ENCODE measurements at regions of chr1 and their contacts with region 1.

Region 1: GRCh38 chr1:180881806-180882509 is 30.7 kb upstream of the KIAA1614 start:
- DNase-seq: no peak
- H3K4me3 ChIP-seq: no peak overlapping the region
- H3K27ac ChIP-seq: no peak overlapping the region
- H3K4me1 ChIP-seq: no peaks in the 10 kb centered on the region
- H3K27me3 ChIP-seq: no peaks in the 10 kb centered on the region
- CTCF ChIP-seq: peak; percentile 12 to 44 (median 27)

Region 2: GRCh38 chr1:180842052-180842451 is 39.9 kb before region 1 on chr1:
- intact Hi-C with region 1: no loop called
- DNase-seq: no peak
- H3K4me3 ChIP-seq: no peak overlapping the region
- H3K27ac ChIP-seq: no peak overlapping the region
- H3K4me1 ChIP-seq: peaks cover 0 to 6% of the 10 kb centered on the region in 2 donors
- H3K27me3 ChIP-seq: no peaks in the 10 kb centered on the region
- CTCF ChIP-seq: no peak

Region 3: DNA sequence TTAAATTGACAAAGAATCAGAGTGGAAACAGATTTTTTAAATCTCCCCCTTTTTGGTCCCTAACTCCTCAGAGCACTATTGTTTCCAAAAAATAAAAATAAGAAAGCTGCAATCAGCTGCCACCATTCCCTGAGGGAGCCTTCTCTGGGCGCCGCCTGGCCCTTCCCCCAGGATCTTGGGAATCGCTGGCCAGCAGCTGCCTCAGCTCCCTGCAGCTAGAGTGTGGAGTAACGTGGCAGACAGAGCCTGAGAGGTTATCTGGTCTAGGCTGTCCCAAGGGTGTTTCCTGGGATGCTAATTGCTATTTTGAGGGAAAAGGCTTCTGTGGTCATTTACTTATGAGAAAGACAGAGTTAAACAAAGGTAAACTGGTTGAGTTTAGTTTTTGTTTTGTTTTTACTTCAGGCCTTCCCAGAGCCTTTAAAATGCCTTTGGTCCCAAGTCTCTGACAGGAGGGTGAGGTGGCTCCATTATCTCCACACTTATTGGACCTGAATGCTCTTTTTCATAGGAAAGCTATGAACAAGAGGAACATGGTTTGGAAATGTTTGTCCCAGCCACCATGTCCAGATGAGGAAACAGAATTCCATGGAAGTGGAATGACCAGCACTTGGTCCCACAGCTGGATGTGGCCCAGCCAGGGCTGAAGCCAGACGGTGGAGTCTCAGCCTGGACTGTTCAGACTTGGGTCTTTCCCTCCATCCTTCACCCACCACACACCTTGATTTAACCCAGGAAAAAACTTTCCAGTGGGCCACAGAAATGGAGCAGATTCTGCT is 16.7 kb after region 1 on chr1:
- intact Hi-C with region 1: no loop called
- DNase-seq: no peak
- H3K4me3 ChIP-seq: no peak overlapping the region
- H3K27ac ChIP-seq: no peak overlapping the region
- H3K4me1 ChIP-seq: peaks cover 0 to 3% of the 10 kb centered on the region in 2 donors
- H3K27me3 ChIP-seq: no peaks in the 10 kb centered on the region
- CTCF ChIP-seq: no peak

Region 4: DNA sequence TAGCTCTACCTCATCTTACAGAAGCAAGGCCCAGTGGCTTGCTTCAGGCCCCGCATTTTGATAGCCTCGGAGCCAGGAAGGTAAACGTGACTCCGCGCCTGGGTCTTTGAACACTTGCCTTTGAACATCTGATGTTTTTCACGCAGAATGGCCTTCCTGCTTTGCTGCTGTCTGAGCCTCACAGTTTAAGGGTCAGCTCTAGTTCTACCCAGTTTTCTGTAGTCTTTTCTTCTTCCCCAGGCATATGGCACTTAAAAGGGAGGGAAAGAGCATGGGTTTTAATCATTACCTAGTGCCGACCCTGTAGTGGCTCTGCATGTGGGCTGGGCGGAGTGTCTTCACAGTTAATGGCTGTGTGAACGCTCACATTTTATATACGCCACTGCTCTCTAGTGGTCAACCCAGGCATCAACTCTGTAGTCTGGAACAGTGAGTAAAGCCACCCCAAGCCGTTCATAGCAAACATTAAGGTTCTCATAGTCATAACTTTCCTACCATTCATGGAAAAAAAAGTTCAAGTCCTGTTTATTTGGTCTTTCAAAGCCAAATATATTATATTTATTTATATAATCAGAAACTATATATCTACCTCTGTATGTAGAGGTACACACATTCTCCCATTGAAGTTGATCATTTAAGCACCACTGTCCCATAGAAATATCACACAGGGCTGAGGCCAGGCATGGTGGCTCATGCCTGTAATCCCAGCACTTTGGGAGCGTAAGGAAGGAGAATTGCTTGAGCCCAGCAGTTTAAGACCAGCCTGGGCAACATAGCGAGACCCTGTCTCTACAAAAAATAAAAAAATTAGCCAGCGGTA is 284.6 kb after region 1 on chr1:
- intact Hi-C with region 1: loop called (anchors 1 kb)
- DNase-seq: peak in 1 of 2 donors; percentile 83
- H3K4me3 ChIP-seq: no peak overlapping the region
- H3K27ac ChIP-seq: no peak overlapping the region
- H3K4me1 ChIP-seq: peaks cover 0 to 2% of the 10 kb centered on the region in 2 donors
- H3K27me3 ChIP-seq: no peaks in the 10 kb centered on the region
- CTCF ChIP-seq: peak; percentile 83 to 85 (median 84)